ENCODE measurements at regions of chr13 and their contacts with region 1.

Region 1: GRCh38 chr13:77300176-77301037 is 26.5 kb downstream of the MYCBP2 start:
- ATAC-seq: peak in 2 of 8 experiments; percentile 43 to 56
- H3K4me3 ChIP-seq: no peak overlapping the region
- H3K27ac ChIP-seq: no peak overlapping the region
- H3K4me1 ChIP-seq: no peaks in the 10 kb centered on the region

Region 2: GRCh38 chr13:77492982-77493381 is 192.6 kb after region 1 on chr13:
- in situ Hi-C with region 1: loop called in 1 of 9 experiments (anchors 25 kb)
- ATAC-seq: peak; percentile 42 to 78 (median 61)
- H3K4me3 ChIP-seq: no peak overlapping the region
- H3K27ac ChIP-seq: no peak overlapping the region
- H3K4me1 ChIP-seq: peaks cover 3 to 6% of the 10 kb centered on the region in 2 donors

Measured in motor neuron (in vitro differentiated cells).